Natural killer cell (primary cell): ENCODE measurements at regions of chr2 and their contacts with region 1.

Region 1: DNA sequence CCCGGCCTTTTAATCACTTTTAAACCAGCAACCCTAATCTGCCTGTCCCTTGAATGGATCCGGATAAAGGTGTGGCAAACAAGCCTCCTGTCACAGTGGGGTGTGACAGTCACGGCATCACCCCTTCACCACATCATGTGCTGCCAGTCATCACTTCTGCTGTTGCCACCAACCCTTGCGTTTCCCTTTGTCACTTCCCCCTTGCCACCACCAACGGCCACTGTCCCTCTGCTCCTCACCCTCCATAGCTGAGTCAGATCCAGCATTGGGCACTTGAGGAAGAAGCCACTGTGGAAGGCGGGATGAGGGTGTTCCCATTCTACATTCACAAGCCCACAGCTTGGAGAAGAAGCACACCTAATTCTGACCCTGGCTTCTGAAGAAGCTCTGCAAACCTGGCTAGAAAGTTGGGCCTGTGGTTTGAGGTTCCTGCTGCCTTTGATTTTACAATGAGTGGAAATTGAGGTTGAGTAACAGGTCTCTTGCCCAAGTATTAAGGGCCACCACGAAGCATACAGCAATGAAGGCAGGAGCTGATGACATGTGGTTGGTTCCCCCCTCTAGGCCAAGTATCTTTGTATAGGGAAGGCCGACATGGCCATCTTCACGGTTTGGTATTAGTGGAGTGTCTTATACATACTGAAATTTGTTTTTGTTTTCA is 22.9 kb upstream of the DARS1 start:
- DNase-seq: peak; percentile 70 to 88
- ATAC-seq: peak; percentile 88 to 95 (median 93)
- H3K4me3 ChIP-seq: no peak overlapping the region
- H3K4me3 Mint-ChIP-seq: peak overlapping the region; percentile 57
- H3K27ac ChIP-seq: peak overlapping the region; percentile 59
- H3K27ac Mint-ChIP-seq: peak overlapping the region; percentile 88 to 91
- H3K4me1 ChIP-seq: peaks cover 28% of the 10 kb centered on the region
- H3K4me1 Mint-ChIP-seq: peaks cover 20 to 28% of the 10 kb centered on the region in 2 donors
- H3K27me3 ChIP-seq: no peaks in the 10 kb centered on the region
- H3K27me3 Mint-ChIP-seq: peaks cover 0 to 6% of the 10 kb centered on the region in 2 donors
- CTCF ChIP-seq: no peak

Region 2: DNA sequence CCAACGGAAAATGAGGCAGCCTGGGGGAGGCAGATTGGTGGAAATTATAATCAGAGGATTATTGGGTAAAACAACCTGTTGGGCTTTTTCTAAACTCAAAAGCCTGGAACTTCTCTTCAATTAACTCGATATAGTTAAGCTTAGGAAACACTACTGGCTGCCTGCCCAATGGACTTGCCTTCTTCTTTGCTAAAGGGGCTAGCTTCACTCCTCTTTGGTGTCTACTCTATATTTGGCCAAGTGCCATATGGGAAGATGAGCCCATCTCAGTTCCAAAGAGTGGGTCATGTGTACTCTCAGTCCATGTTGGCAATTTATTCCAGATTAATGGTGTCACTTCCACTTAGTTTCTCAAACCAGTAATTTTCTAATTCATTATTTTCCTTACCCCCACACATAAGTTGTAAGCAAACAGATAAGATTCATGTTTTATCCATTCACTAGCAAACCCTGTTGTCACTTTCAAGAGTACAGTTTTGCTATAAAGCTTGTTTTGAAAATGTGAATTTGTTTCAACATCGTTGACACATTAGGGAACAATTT is 57.2 kb before region 1 on chr2:
- intact Hi-C with region 1: loop called (anchors 10 kb)
- DNase-seq: no peak
- ATAC-seq: no peak
- H3K4me3 ChIP-seq: no peak overlapping the region
- H3K4me3 Mint-ChIP-seq: no peak overlapping the region
- H3K27ac ChIP-seq: no peak overlapping the region
- H3K27ac Mint-ChIP-seq: no peak overlapping the region
- H3K4me1 ChIP-seq: no peaks in the 10 kb centered on the region
- H3K4me1 Mint-ChIP-seq: peaks cover 20 to 42% of the 10 kb centered on the region in 2 donors
- H3K27me3 ChIP-seq: no peaks in the 10 kb centered on the region
- H3K27me3 Mint-ChIP-seq: no peaks in the 10 kb centered on the region
- CTCF ChIP-seq: no peak

Region 3: DNA sequence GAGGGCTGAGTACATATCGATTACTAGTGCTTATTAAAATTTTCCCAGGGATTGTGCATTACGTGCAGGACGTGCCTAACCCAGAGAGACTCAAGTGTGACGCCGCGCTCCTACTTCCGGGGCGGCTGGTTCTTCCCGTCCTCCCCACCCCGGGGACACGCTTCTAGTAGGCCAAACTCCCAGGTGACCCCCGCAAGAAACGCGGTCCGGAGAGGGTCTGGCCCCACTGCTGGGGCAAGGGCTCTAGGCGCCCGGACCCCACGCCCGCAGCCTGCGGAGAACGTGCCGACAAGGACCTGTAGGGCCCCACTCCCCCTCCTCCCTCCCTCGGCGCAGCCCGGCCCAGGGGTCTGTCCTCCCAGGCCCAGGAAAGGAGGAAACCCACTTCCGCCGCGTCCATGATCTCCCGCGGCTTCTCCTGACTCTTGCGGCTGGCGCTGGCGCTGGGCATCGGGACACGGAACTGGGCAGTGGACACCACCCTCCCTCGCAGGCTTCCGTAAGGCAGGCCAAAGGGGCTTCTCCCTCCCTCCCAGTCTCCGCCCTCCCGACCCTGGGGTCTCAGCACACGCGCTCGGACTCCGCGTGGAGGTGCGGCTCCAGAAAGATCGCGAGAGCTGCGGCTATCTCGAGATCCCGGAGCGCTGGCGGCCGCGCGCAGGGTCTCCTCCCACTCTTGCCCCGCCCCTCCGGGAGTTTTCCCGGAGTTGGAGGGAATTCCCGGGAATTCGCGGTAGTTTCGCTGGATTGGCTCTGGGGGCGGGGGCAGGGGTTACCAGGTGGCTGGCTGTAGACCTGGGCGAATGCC is 23.1 kb before region 1 on chr2 and contains the start of gene DARS1:
- intact Hi-C with region 1: loop called (anchors 2 kb)
- DNase-seq: peak; percentile 75 to 90
- ATAC-seq: peak; percentile 89 to 90 (median 89)
- H3K4me3 ChIP-seq: peak within 1 kb of the TSS; percentile 88
- H3K4me3 Mint-ChIP-seq: peak within 1 kb of the TSS; percentile 95
- H3K27ac ChIP-seq: peak within 1 kb of the TSS; percentile 97
- H3K27ac Mint-ChIP-seq: peak within 1 kb of the TSS; percentile 87 to 93
- H3K4me1 ChIP-seq: peaks cover 7% of the 10 kb centered on the region
- H3K4me1 Mint-ChIP-seq: peaks cover 24 to 29% of the 10 kb centered on the region in 2 donors
- H3K27me3 ChIP-seq: no peaks in the 10 kb centered on the region
- H3K27me3 Mint-ChIP-seq: no peaks in the 10 kb centered on the region
- CTCF ChIP-seq: no peak
- total RNA-seq, gene DARS1: 28.4 to 31.3 (median 30.3) TPM

Region 4: GRCh38 chr2:136098441-136098840 is 90.1 kb after region 1 on chr2:
- intact Hi-C with region 1: no loop called
- DNase-seq: no peak
- ATAC-seq: no peak
- H3K4me3 ChIP-seq: no peak overlapping the region
- H3K4me3 Mint-ChIP-seq: no peak overlapping the region
- H3K27ac ChIP-seq: no peak overlapping the region
- H3K27ac Mint-ChIP-seq: no peak overlapping the region
- H3K4me1 ChIP-seq: no peaks in the 10 kb centered on the region
- H3K4me1 Mint-ChIP-seq: peaks cover 0 to 13% of the 10 kb centered on the region in 2 donors
- H3K27me3 ChIP-seq: no peaks in the 10 kb centered on the region
- H3K27me3 Mint-ChIP-seq: peaks cover 0 to 4% of the 10 kb centered on the region in 2 donors
- CTCF ChIP-seq: no peak

Region 5: DNA sequence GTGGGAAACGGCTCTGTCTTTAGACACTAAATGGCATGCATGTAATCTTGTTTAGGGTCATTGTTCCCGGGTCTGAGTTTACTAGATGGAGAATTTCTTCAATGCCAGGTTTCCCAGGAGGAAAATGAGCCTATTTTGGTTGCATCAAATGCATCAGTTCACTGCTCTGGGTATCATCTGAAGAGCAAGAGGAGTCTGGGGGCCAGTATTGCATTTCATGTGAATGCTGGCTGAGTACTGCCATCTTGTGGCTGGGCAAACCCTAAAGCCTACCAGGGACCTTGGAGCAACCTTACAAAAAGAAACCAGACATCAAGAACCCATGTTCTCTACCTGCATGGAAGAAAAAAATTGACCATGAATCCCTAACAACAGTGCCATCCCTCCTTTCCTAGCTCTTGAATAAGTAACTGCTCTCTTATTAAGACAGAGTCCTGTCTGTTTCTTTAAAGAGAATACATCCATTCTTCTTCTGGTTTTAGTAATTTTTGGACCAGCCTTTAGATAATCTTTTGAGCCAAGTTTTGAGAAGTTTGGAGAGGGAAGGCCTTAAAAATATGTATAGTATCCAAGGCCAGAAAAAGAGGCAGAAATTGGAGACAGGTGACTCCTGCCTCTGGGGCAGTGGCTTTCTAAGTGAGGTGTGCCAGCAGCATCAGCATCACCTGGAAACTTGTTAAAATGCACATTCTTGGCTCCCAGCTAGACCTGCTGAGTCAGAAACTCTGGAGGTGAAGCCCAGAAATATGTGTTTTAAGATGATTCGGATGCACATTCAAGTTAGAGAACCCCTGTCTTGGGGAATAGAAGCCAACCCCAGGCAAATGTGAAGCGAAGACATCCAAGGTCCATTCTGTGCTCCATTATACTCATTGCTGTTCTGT is 370.6 kb after region 1 on chr2:
- intact Hi-C with region 1: loop called (anchors 10 kb)
- DNase-seq: peak; percentile 54 to 90
- ATAC-seq: peak; percentile 61 to 77 (median 76)
- H3K4me3 ChIP-seq: no peak overlapping the region
- H3K4me3 Mint-ChIP-seq: no peak overlapping the region
- H3K27ac ChIP-seq: no peak overlapping the region
- H3K27ac Mint-ChIP-seq: no peak overlapping the region
- H3K4me1 ChIP-seq: peaks cover 21% of the 10 kb centered on the region
- H3K4me1 Mint-ChIP-seq: peaks cover 7 to 26% of the 10 kb centered on the region in 2 donors
- H3K27me3 ChIP-seq: no peaks in the 10 kb centered on the region
- H3K27me3 Mint-ChIP-seq: no peaks in the 10 kb centered on the region
- CTCF ChIP-seq: peak; percentile 80